K562 (cell line): ENCODE measurements at regions of chr4 and their contacts with region 1.

Region 1: DNA sequence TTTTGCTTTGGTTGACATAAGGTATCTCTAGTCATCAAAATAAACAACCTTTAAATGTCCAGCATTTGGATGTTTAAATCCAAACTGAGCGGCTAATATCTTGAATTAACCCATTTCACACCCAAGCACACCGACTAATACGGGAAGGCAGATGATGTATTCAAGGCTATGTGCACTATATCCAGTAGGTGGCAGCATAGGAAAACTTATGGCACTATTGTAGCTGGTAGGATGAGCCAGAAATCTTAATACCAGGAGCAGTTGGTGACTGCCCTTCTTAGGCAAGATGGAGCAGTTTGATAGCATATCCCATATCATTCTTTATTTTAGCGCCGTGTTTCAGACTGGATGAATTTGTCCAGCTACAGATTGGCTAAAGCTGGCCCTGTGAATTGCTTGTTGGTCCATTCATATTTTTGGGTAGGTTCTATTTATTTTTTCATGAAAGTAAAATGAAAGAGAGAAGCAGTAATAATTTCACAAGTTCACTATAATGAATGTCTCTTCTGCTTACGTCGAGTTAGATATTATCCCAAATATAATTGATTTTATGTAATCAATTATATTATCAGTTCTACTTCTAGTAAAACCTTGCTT is 24.4 kb downstream of the UCHL1 start:
- DNase-seq: peak; percentile 65 to 74 (median 70)
- ATAC-seq: peak; percentile 97
- H3K4me3 ChIP-seq: no peak overlapping the region
- H3K27ac ChIP-seq: no peak overlapping the region
- H3K4me1 ChIP-seq: no peaks in the 10 kb centered on the region
- H3K27me3 ChIP-seq: no peaks in the 10 kb centered on the region
- CTCF ChIP-seq: peak; percentile 73 to 92 (median 79)
- EP300 ChIP-seq: no peak
- POLR2A ChIP-seq: no peak
- RAD21 ChIP-seq: peak; percentile 91 to 93

Region 2: GRCh38 chr4:40736910-40737309 is 544.2 kb before region 1 on chr4:
- CTCF ChIA-PET with region 1: no interaction called
- POLR2A ChIA-PET with region 1: no interaction called
- in situ Hi-C with region 1: no loop called
- intact Hi-C with region 1: no loop called
- DNase-seq: peak in 3 of 4 experiments; percentile 9 to 14 (median 11)
- ATAC-seq: no peak
- H3K4me3 ChIP-seq: no peak overlapping the region
- H3K27ac ChIP-seq: no peak overlapping the region
- H3K4me1 ChIP-seq: no peaks in the 10 kb centered on the region
- H3K27me3 ChIP-seq: peaks cover 0 to 3% of the 10 kb centered on the region in 2 experiments; a peak in 3 of 5 replicates
- CTCF ChIP-seq: peak; percentile 17 to 66 (median 33); a peak in 3 of 6 replicates
- EP300 ChIP-seq: no peak
- POLR2A ChIP-seq: no peak
- RAD21 ChIP-seq: peak; percentile 70 to 71

Region 3: GRCh38 chr4:41257257-41257901 is 23.8 kb before region 1 on chr4:
- CTCF ChIA-PET with region 1: no interaction called
- POLR2A ChIA-PET with region 1: no interaction called
- in situ Hi-C with region 1: no loop called
- intact Hi-C with region 1: no loop called
- DNase-seq: no peak
- ATAC-seq: no peak
- H3K4me3 ChIP-seq: no peak overlapping the region
- H3K27ac ChIP-seq: no peak overlapping the region
- H3K4me1 ChIP-seq: no peaks in the 10 kb centered on the region; a peak in 1 of 5 replicates
- H3K27me3 ChIP-seq: peaks cover 0 to 8% of the 10 kb centered on the region in 2 experiments; a peak in 2 of 5 replicates
- CTCF ChIP-seq: no peak
- EP300 ChIP-seq: no peak
- POLR2A ChIP-seq: no peak
- RAD21 ChIP-seq: no peak

Region 4: DNA sequence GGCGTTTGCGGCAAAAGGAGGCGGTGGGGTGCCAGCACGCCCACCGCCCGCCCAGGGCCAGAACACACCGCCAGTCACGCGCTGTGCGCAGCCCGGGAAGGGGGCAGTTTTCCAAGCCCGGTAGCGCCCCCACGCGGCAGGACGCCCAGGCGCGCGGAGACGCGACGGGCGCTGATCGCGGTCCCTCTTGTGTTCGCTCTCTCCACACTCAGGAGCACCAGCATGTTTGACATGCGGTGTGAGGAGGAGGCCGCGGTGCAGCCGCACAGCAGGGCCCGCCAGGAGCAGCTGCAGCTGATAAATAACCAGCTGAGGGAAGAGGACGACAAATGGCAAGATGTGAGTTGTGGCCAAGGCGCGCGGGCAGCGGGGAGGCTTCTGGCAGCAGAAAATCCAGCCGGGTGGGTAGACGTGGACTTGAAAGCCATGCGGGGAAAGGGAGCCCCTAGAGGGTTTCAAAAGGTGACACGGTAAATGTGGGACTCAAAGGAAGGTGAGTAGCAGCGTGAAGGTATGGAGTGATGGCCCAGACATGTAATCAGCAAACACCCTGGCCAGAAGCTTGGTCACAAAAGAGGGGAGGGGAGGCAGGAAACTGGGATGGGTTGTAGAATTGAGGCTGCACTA is 363.3 kb after region 1 on chr4:
- CTCF ChIA-PET with region 1: interaction called, 8 read pairs
- POLR2A ChIA-PET with region 1: interaction called, 6 read pairs
- in situ Hi-C with region 1: no loop called
- intact Hi-C with region 1: loop called (anchors 1 kb)
- DNase-seq: peak; percentile 56 to 67 (median 58)
- ATAC-seq: peak; percentile 100
- H3K4me3 ChIP-seq: no peak overlapping the region
- H3K27ac ChIP-seq: no peak overlapping the region
- H3K4me1 ChIP-seq: peaks cover 0 to 5% of the 10 kb centered on the region in 2 experiments; a peak in 1 of 5 replicates
- H3K27me3 ChIP-seq: no peaks in the 10 kb centered on the region
- CTCF ChIP-seq: peak; percentile 75 to 93 (median 77)
- EP300 ChIP-seq: no peak
- POLR2A ChIP-seq: no peak
- RAD21 ChIP-seq: peak; percentile 42 to 64

Region 5: GRCh38 chr4:41661442-41662076 is 380.4 kb after region 1 on chr4:
- CTCF ChIA-PET with region 1: interaction called, 18 read pairs
- POLR2A ChIA-PET with region 1: no interaction called
- in situ Hi-C with region 1: loop called (anchors 10 kb)
- intact Hi-C with region 1: loop called (anchors 1 kb)
- DNase-seq: peak; percentile 56 to 66 (median 64)
- ATAC-seq: peak; percentile 86
- H3K4me3 ChIP-seq: no peak overlapping the region
- H3K27ac ChIP-seq: no peak overlapping the region
- H3K4me1 ChIP-seq: no peaks in the 10 kb centered on the region
- H3K27me3 ChIP-seq: peaks cover 0 to 5% of the 10 kb centered on the region in 2 experiments; a peak in 2 of 5 replicates
- CTCF ChIP-seq: peak; percentile 71 to 89 (median 88)
- EP300 ChIP-seq: no peak
- POLR2A ChIP-seq: no peak
- RAD21 ChIP-seq: peak; percentile 73 to 74

Region 6: GRCh38 chr4:41882625-41883347 is 601.6 kb after region 1 on chr4:
- CTCF ChIA-PET with region 1: no interaction called
- POLR2A ChIA-PET with region 1: no interaction called
- in situ Hi-C with region 1: loop called (anchors 10 kb)
- intact Hi-C with region 1: loop called (anchors 1 kb)
- DNase-seq: peak; percentile 54 to 84 (median 78)
- ATAC-seq: peak; percentile 97
- H3K4me3 ChIP-seq: no peak overlapping the region
- H3K27ac ChIP-seq: no peak overlapping the region
- H3K4me1 ChIP-seq: peaks cover 0 to 9% of the 10 kb centered on the region in 2 experiments; a peak in 1 of 5 replicates
- H3K27me3 ChIP-seq: peaks cover 24 to 38% of the 10 kb centered on the region in 2 experiments
- CTCF ChIP-seq: peak; percentile 78 to 88 (median 82)
- EP300 ChIP-seq: no peak
- POLR2A ChIP-seq: no peak
- RAD21 ChIP-seq: peak; percentile 52 to 65